ENCODE measurements at regions of chr5 and their contacts with region 1.

Region 1: GRCh38 chr5:69334793-69335268 is 2.2 kb upstream of the CCDC125 start:
- DNase-seq: peak; percentile 95
- ATAC-seq: peak; percentile 86

Region 2: DNA sequence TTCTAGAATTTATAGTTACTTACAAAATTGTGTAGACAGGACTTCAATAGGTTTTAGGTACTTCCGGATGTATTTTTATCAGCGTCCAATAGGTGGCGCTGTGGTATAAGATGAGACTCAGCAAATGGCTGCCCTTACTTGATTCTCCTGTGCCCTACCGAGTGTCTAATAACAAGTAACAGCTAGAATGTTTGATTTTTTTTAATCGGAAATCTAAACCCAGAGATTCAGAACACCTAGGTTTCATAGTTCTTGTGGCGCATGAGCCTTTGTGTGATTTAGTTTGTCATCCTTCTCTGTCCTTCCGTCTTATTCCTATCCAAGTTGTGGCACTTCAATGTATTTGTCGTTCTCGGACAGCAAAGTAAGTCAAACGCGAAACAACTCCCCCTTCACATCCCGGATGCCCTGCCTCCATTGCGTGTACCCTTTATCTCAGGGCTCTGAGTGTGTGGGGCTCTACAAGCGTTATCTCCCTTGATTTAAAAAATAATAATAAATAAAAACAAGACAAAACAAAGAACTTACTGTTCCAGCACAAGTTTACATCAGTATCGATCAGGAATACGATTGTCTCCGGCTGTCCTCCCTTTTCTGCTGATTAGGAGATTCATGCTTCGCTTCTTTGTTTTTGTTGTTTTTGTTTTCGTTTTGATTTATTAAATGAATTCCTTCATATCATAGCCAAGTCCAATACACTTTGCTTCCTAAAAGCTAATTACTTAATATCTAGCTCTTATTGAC is 291.7 kb before region 1 on chr5:
- intact Hi-C with region 1: loop called (anchors 5 kb)
- DNase-seq: no peak
- ATAC-seq: peak; percentile 94

Region 3: DNA sequence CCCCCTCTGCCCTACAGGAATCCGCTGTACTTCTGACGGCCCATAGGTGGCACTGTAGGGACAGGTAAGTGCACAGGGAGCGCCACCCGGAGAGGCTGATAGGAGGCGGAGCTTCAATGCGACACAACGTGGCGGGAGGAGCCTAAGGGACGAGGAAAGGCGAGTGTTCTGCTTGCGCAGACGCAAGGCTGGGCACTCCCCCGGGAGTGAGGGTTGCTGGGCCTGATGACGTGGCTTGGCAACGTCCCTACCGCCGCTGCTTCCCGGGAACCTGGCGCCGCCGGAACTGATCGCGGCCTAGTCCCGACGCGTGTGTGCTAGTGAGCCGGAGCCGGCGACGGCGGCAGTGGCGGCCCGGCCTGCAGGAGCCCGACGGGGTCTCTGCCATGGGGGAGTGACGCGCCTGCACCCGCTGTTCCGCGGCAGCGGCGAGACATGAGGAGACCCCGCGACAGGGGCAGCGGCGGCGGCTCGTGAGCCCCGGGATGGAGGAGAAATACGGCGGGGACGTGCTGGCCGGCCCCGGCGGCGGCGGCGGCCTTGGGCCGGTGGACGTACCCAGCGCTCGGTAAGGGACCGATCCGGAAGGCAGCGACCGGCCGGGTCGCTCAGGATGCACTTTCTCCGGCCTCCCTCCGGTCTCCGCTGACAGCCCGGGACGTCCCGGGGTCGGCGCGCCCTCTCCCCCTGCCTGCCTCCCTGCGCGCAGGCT is 240.9 kb before region 1 on chr5 and contains the start of gene SLC30A5:
- intact Hi-C with region 1: loop called (anchors 5 kb)
- DNase-seq: peak; percentile 99
- ATAC-seq: peak; percentile 100
- total RNA-seq, gene SLC30A5: 30.2 TPM

Region 4: GRCh38 chr5:69166686-69167492 is 167.9 kb before region 1 on chr5 and contains the start of gene CCNB1:
- intact Hi-C with region 1: loop called (anchors 2 kb)
- DNase-seq: peak; percentile 98
- ATAC-seq: peak; percentile 100
- total RNA-seq, gene CCNB1: 3.5 TPM

Region 5: GRCh38 chr5:69234457-69235268 is 100.2 kb before region 1 on chr5 and contains the start of gene CDK7:
- intact Hi-C with region 1: loop called (anchors 5 kb)
- DNase-seq: peak; percentile 96
- ATAC-seq: peak; percentile 100
- total RNA-seq, gene CDK7: 10.5 TPM

Measured in Right ventricle myocardium inferior (tissue), 1 donor.